ENCODE measurements at regions of chr1 and their contacts with region 1.

Region 1: DNA sequence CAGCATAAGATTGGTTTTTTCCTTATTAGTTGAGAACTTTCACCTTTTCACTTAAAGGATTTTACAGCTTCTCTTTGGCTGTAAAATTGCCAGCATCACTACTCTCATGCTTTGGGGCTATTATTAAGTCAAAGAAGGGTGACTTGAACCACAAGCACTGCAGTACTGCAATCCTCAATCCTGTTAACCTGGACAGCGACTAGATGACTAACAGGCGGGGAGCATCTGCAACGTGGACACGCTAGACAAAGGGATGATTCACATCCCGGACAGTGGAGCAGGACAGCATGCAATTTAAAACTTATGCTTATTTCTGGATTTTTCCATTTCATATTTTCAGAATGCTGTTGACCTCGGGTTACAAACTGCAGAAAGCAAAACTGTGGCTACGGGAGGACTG is 8.1 kb downstream of the ARV1 start:
- DNase-seq: no peak
- ATAC-seq: no peak
- H3K4me3 ChIP-seq: no peak overlapping the region
- H3K27ac ChIP-seq: no peak overlapping the region
- H3K4me1 ChIP-seq: peaks cover 0 to 10% (median 0%) of the 10 kb centered on the region in 9 donors
- H3K27me3 ChIP-seq: no peaks in the 10 kb centered on the region
- CTCF ChIP-seq: no peak

Region 2: GRCh38 chr1:230807029-230807428 is 179.9 kb before region 1 on chr1:
- intact Hi-C with region 1: loop called in 1 of 10 experiments (anchors 10 kb)
- DNase-seq: peak; percentile 68 to 81
- ATAC-seq: peak; percentile 85 to 98 (median 95)
- H3K4me3 ChIP-seq: no peak overlapping the region
- H3K27ac ChIP-seq: peak overlapping the region in 7 of 10 donors; percentile 44 to 74 (median 51)
- H3K4me1 ChIP-seq: peaks cover 0 to 36% (median 10%) of the 10 kb centered on the region in 9 donors
- H3K27me3 ChIP-seq: no peaks in the 10 kb centered on the region
- CTCF ChIP-seq: no peak

Region 3: DNA sequence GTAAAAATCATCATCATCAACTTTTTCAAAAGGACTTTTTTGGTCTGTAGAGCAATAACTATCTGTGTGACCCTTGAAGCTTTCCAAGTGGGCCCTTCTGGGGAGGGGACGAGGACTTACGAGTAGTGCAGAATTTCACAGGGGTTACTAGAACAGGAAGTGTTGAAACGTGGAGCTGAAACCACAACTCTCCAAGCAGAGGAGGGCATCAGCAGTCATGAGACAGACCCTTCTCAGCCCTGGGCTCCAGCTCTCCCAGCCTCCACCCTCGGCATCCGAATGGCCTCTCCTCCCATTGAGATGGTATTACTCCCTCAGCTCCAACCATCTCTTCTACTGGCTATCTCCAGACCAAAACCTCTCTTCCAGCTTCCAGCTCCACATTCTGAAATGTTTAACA is 49.4 kb after region 1 on chr1:
- intact Hi-C with region 1: no loop called
- DNase-seq: no peak
- ATAC-seq: peak in 1 of 8 donors; percentile 16
- H3K4me3 ChIP-seq: no peak overlapping the region
- H3K27ac ChIP-seq: no peak overlapping the region
- H3K4me1 ChIP-seq: peaks cover 2 to 44% (median 22%) of the 10 kb centered on the region in 9 donors
- H3K27me3 ChIP-seq: peaks cover 0 to 27% (median 7%) of the 10 kb centered on the region in 7 donors
- CTCF ChIP-seq: no peak

Region 4: DNA sequence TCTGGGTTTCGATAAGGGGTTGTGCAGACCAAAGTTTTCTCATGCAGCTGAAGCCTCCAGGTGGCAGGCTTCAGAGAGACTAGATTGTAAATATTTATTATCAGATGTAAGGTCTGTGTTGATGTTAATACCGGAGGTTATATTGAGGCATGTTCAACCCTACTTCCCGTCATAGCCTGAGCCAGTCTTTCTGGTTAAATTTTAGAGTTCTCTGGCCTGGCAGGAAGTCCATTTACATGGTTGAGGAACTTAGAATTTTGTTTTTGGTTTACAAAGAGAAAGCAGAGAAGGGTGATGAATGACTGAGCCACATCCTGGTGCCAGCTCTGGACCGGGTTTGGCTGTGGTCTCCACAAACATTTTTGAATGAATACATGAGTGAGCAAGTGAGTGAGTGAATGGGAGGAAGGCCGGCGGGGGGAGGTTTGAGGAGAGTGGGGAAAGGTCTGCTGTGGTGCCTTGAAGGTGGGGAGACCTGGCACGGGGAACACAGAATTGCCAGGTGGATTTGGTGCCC is 858.1 kb after region 1 on chr1:
- intact Hi-C with region 1: no loop called
- DNase-seq: no peak
- ATAC-seq: peak in 2 of 8 donors; percentile 2 to 3
- H3K4me3 ChIP-seq: peak overlapping the region; percentile 37 to 62 (median 51)
- H3K27ac ChIP-seq: peak overlapping the region; percentile 21 to 85 (median 74)
- H3K4me1 ChIP-seq: peaks cover 0 to 63% (median 19%) of the 10 kb centered on the region in 9 donors
- H3K27me3 ChIP-seq: no peaks in the 10 kb centered on the region
- CTCF ChIP-seq: peak in 1 of 9 donors; percentile 22